ENCODE measurements at regions of chr2 and their contacts with region 1.

Region 1: DNA sequence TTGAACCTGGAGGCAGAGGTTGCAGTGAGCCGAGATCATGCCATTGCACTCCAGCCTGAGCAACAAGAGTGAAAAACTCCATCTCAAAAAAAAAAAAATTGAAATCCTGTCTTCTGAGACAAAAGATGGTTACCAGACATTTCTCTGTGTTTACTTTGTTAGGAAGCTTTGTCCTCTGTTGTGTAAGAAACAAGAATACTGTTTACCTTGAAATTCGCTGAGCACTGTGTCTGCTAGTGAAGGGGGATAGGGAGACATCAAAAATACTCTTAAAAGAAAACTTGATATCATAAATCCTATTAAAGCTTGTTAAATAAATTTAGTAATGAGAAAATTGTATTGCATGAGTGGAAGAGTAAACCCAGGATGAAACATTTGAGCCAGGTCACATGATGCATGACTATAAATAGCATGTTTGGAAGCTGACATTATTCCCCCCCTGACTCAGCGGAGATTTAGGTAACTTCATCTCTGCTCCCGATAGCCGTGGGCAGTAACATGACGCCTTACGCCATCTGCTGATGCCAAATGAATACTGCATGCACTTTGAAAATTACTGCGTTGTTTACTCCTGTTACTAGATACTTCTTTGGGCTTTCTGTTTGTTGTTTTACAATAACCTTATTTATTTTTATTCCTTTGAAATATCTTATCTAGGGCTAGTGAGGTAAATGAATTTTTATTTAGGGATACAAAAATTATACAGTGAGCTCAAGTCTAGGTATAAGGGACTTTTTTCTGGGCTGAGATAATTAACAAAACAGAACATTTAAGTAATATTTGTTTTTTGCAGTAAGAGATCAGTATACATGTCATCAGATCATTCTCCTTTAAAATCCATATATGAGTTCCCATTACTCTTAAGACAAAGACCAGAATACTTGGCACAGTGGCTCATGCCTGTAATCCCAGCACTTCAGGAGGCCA is 134.9 kb downstream of the MAP3K20 start:
- DNase-seq: peak; percentile 68 to 92
- ATAC-seq: peak; percentile 96 to 99
- H3K4me3 ChIP-seq: no peak overlapping the region
- H3K27ac ChIP-seq: peak overlapping the region; percentile 55 to 75
- H3K4me1 ChIP-seq: peaks cover 15% of the 10 kb centered on the region
- CTCF ChIP-seq: peak; percentile 96
- EP300 ChIP-seq: peak in 1 of 2 experiments; percentile 21; a peak in 1 of 5 replicates
- POLR2A ChIP-seq: no peak
- RAD21 ChIP-seq: peak; percentile 97 to 98

Region 2: DNA sequence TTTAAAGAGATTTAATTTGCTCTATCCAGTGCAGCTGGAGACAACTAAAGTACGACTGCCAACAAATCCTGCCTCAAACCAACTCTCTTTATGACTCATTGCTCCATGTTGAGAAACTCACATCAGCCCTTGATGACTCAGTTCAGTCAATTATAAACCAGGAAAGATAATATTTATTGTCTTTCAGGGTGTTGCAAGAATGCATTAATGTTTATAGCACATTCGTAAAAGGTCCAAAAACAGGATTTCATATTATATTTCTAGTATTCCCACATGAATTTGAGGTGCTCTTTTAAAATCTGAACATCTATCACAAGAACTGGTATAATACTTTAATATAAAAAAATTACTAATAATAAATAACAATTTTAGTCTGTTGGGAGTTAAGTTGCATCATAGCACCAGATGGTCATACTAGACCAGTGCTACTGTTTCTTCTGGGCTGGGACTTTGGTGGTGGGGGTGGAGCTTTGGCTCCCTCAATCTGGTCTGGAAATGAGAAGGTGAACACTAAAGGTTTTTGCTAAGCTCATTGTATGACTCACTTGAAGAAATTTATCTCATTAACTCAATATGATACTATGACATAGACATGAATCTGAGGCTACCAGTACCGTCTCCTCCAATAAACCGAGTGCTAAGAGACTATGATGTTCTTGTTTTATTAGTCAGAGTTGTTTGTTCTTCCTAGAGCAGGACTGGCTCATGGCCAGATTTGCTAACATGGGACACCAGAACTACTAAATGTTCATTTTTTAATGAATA is 161.5 kb before region 1 on chr2:
- CTCF ChIA-PET with region 1: interaction called, 11 read pairs
- POLR2A ChIA-PET with region 1: interaction called, 4 read pairs
- DNase-seq: peak; percentile 71 to 97
- ATAC-seq: peak; percentile 94 to 98
- H3K4me3 ChIP-seq: peak overlapping the region; percentile 26; the same call in 1 of the 3 replicates
- H3K27ac ChIP-seq: peak overlapping the region; percentile 83 to 90
- H3K4me1 ChIP-seq: peaks cover 54% of the 10 kb centered on the region
- CTCF ChIP-seq: no peak
- EP300 ChIP-seq: peak; percentile 80 to 82; a peak in 4 of 5 replicates
- POLR2A ChIP-seq: no peak
- RAD21 ChIP-seq: no peak; a peak in 2 of 5 replicates

Region 3: GRCh38 chr2:173090276-173090877 is 120.2 kb before region 1 on chr2:
- CTCF ChIA-PET with region 1: interaction called, 20 read pairs
- POLR2A ChIA-PET with region 1: no interaction called
- DNase-seq: peak in 1 of 2 experiments; percentile 52
- ATAC-seq: peak; percentile 64 to 73
- H3K4me3 ChIP-seq: no peak overlapping the region
- H3K27ac ChIP-seq: peak overlapping the region; percentile 44 to 56
- H3K4me1 ChIP-seq: peaks cover 75% of the 10 kb centered on the region
- CTCF ChIP-seq: no peak
- EP300 ChIP-seq: no peak
- POLR2A ChIP-seq: no peak
- RAD21 ChIP-seq: no peak

Region 4: DNA sequence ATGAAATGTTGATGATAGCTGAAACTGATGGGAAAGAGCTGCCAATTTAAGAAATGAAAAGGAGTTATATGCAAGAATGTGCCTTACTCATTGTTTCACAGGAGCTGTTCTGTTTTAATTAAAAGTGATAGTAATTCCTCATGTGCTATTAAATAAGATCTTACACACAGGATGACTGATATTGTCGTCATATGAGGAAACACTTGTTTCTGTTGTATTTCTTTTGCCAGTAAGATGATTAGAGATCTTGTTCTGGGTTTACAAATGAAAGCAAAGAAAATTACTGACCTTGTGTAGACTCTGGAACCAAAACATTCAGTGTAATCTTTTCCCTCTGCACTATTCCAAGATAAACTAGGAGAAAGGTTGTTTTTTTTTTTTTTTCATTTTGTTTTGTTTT is 11.2 kb before region 1 on chr2:
- CTCF ChIA-PET with region 1: interaction called, 18 read pairs
- POLR2A ChIA-PET with region 1: no interaction called
- DNase-seq: no peak
- ATAC-seq: no peak
- H3K4me3 ChIP-seq: no peak overlapping the region
- H3K27ac ChIP-seq: no peak overlapping the region
- H3K4me1 ChIP-seq: peaks cover 11% of the 10 kb centered on the region; the same call in 2 of the 3 replicates
- CTCF ChIP-seq: no peak
- EP300 ChIP-seq: no peak
- POLR2A ChIP-seq: no peak
- RAD21 ChIP-seq: no peak

Region 5: DNA sequence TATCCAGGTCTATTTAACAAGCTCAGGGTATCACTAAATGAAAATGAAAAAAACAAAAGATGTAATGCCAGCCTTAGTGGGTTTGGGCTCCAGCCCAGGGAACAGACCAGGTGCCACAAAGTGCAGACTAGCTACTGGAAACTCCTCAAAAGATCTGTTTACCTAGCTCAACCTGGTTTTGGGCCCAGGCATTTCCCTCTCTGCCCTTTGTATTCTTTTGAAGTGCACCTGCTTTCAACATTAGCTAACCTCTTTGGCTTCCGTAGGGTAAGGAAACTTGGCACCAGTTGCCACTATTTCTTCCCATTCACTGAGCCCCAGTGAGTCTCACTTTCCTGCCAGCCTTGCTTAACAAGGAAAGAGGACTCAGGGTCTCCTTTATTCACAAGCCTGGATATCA is 20.5 kb after region 1 on chr2:
- CTCF ChIA-PET with region 1: interaction called, 10 read pairs
- POLR2A ChIA-PET with region 1: no interaction called
- DNase-seq: no peak
- ATAC-seq: no peak
- H3K4me3 ChIP-seq: no peak overlapping the region
- H3K27ac ChIP-seq: no peak overlapping the region
- H3K4me1 ChIP-seq: peaks cover 20% of the 10 kb centered on the region
- CTCF ChIP-seq: no peak
- EP300 ChIP-seq: no peak
- POLR2A ChIP-seq: no peak
- RAD21 ChIP-seq: no peak

Measured in A549 (cell line).